Dorsolateral prefrontal cortex (tissue), 120 donors: ENCODE measurements at regions of chrX and their contacts with region 1.

Region 1: GRCh38 chrX:12814420-12814819 is 23.2 kb downstream of the PRPS2 start:
- DNase-seq: peak in 2 of 10 donors; percentile 18 to 46
- H3K4me3 ChIP-seq: no peak overlapping the region
- H3K27ac ChIP-seq: no peak overlapping the region
- H3K27me3 ChIP-seq: peaks cover 0 to 67% (median 8%) of the 10 kb centered on the region in 45 donors
- CTCF ChIP-seq: peak in 53 of 56 donors; percentile 30 to 75 (median 54)

Region 2: GRCh38 chrX:12881914-12882313 is 67.5 kb after region 1 on chrX:
- intact Hi-C with region 1: no loop called
- DNase-seq: no peak
- H3K4me3 ChIP-seq: no peak overlapping the region
- H3K27ac ChIP-seq: no peak overlapping the region
- H3K27me3 ChIP-seq: peaks cover 0 to 80% (median 22%) of the 10 kb centered on the region in 45 donors
- CTCF ChIP-seq: no peak

Region 3: DNA sequence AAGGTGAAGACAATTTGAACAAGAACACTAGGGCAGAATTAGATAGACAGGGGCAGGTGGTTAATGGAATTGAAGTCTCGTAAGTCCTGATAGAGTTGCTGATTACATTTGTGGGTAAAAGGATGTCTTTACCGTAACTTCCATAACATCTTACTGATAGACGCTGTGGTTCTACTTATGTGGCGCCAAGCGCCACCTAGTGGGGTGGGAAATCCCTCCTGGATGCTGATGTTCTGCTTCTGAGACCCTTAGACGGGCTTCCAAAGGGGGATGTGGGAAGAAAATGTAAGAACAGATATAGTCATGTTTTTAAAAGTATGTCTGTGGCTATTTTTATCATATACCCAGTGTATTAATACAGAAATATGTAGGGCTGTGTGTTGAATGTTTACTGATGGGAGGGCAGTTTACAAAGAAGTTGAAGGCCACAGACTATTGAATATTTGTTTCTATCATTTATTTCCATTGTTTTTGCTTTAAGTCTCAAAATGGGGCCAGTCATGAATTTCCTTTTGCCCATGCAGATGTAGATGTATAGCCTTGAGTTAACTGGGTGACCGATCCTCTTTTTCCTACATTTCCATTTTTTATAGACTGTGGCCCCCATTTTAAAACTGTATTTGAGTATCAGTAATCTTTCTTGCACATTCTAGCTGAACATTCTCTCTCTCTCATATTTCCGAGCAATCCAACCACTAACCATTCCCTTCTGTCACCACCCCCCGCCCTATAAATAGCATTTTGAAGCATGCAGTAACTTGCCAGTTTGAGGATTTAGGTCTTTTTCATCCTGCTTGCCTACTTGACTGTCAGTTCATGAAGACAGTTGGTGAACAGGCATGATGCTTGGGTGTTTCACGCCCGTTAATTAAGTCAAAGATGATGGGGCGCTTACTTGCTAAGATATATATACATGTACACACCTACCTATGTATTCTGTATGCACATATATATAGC is 79.9 kb after region 1 on chrX:
- intact Hi-C with region 1: loop called (anchors 5 to 10 kb)
- DNase-seq: peak in 7 of 10 donors; percentile 21 to 66 (median 45)
- H3K4me3 ChIP-seq: no peak overlapping the region
- H3K27ac ChIP-seq: no peak overlapping the region
- H3K27me3 ChIP-seq: peaks cover 0 to 72% (median 14%) of the 10 kb centered on the region in 45 donors
- CTCF ChIP-seq: peak; percentile 33 to 74 (median 58)